ENCODE measurements at regions of chr6 and their contacts with region 1.

Region 1: DNA sequence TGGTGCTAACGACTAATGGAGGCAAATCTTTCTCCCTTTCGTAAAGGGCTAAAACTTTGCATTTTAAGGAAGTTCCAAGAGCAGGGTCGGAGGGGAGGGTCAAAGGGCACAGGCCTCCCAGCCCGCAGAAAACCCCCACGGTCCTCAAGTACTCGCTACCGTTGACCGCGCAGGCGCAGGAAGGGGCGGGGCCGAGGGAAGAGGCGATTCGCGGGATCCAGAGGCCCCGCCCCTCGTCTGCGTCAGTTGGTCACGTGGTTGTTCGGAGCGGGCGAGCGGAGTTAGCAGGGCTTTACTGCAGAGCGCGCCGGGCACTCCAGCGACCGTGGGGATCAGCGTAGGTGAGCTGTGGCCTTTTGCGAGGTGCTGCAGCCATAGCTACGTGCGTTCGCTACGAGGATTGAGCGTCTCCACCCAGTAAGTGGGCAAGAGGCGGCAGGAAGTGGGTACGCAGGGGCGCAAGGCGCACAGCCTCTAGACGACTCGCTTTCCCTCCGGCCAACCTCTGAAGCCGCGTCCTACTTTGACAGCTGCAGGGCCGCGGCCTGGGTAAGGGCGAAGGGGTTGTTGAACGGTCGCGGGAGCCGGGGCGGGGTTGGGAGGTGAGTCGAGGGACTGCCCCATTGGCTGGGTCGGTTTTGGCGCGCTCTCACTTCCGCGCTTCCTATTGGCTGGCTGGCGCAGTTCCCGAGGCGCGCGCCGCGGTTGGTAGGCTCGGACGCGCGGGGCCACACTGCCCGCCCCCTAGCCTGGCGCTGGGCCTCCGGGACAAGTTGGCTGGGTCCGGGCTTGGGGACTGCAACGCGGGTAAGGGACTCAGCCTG is at the start of gene GMNN:
- DNase-seq: peak; percentile 97 to 100 (median 99)
- ATAC-seq: peak; percentile 84 to 94 (median 87)
- H3K4me3 ChIP-seq: peak within 1 kb of the TSS; percentile 65 to 97 (median 87)
- H3K27ac ChIP-seq: peak within 1 kb of the TSS; percentile 93 to 98 (median 94)
- H3K4me1 ChIP-seq: no peaks in the 10 kb centered on the region
- H3K27me3 ChIP-seq: no peaks in the 10 kb centered on the region
- CTCF ChIP-seq: no peak
- total RNA-seq, gene GMNN: 36.5 to 69.4 (median 50.3) TPM

Region 2: GRCh38 chr6:24719125-24719971 is 55.6 kb before region 1 on chr6 and contains the start of gene C6orf62:
- intact Hi-C with region 1: loop called in 1 of 3 experiments (anchors 10 kb)
- DNase-seq: peak in 3 of 6 donors; percentile 14 to 44 (median 32)
- ATAC-seq: peak in 1 of 4 donors; percentile 3
- H3K4me3 ChIP-seq: peak within 1 kb of the TSS; percentile 80 to 87 (median 84)
- H3K27ac ChIP-seq: peak within 1 kb of the TSS; percentile 98 to 100 (median 100)
- H3K4me1 ChIP-seq: peaks cover 4 to 30% (median 17%) of the 10 kb centered on the region in 3 donors
- H3K27me3 ChIP-seq: no peaks in the 10 kb centered on the region
- CTCF ChIP-seq: no peak
- total RNA-seq, gene C6orf62: 33.7 to 85.6 (median 53.2) TPM

Region 3: DNA sequence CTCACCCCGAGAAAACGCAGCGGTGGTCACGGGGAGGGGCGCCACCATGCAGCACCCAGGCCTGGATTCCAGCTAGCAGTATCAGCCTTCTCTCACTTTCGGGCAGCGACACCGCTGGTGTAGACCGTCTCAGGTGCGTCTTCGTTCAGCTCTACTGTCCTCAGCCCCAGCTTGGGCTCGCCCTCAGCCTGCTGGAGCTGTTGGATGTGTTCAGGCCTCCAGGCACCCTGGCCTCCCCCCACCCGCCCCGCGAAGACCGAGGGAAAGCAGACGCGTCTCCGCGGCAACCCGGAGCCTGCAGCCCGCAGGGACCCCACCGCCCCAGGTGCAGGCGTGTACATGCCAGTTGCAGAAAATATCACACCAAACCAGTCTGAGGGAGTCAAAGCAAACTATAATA is 443.4 kb after region 1 on chr6:
- intact Hi-C with region 1: no loop called
- DNase-seq: peak in 1 of 6 donors; percentile 67
- ATAC-seq: no peak
- H3K4me3 ChIP-seq: no peak overlapping the region
- H3K27ac ChIP-seq: no peak overlapping the region
- H3K4me1 ChIP-seq: peaks cover 7 to 16% (median 13%) of the 10 kb centered on the region in 3 donors
- H3K27me3 ChIP-seq: no peaks in the 10 kb centered on the region
- CTCF ChIP-seq: no peak

Measured in pancreas (tissue), 10 donors.